Heart left ventricle (tissue), 16 donors: ENCODE measurements at regions of chr9 and their contacts with region 1.

Region 1: DNA sequence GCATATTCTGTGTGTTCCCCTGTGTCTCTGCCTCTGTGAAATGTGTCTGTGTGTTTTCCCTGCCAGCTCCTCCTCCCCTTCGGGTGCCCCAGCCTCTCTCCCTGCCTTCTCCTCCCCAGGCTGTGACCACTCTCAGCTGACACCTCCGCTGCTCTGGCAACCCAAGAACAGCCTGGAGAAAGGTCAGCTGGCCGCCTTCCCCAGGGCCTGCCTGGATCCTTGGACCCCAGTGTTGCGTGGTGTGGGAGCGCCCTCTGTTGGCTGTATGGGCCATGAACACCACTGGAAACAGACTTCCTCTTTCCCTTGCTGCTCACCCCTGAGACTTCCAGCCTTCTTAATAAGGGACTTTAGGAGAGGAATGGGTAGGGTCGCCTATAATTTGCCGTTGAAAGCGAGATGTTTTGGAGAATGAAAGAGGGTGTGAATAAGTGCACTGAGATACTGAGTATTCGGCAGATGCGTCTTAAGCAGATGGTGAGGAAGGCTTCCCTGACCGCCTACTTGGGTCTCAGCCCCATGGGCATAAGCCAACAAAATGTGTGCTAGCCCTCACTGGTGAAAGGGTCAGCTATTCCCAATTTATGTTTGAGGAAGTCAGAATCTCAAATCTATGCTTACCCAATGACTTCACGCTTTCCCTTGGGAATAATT is 114.9 kb upstream of the TRIM32 start:
- DNase-seq: peak; percentile 86 to 95 (median 92)
- ATAC-seq: peak; percentile 94 to 99 (median 97)
- H3K4me3 ChIP-seq: no peak overlapping the region
- H3K27ac ChIP-seq: peak overlapping the region in 1 of 12 donors; percentile 22
- H3K4me1 ChIP-seq: peaks cover 0 to 42% (median 23%) of the 10 kb centered on the region in 12 donors
- H3K27me3 ChIP-seq: no peaks in the 10 kb centered on the region
- CTCF ChIP-seq: peak; percentile 71 to 90 (median 84)
- POLR2A ChIP-seq: no peak

Region 2: DNA sequence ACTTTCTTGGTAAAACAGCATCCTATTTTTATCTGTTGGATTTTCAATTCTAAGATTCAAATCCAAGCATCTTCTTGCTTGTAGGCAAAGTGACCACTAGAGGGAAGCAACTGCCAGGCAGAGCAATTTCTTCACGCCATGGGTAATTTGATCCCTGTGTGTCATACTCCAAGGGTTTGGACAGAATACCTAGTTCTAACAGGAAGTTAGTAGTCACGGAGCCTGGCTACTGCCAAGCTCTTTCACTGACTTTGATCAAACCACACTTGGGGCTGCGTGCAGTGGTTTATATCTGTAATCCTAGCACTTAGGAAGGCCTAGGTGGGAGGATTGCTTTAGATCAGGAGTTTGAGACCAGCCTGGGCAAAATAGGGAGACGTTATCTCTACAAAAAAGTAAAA is 980.6 kb before region 1 on chr9:
- intact Hi-C with region 1: loop called in 9 of 10 experiments (anchors 5 to 10 kb)
- DNase-seq: peak in 4 of 5 donors; percentile 33 to 64 (median 52)
- ATAC-seq: peak; percentile 53 to 92 (median 86)
- H3K4me3 ChIP-seq: no peak overlapping the region
- H3K27ac ChIP-seq: peak overlapping the region in 1 of 12 donors; percentile 38
- H3K4me1 ChIP-seq: peaks cover 0 to 6% (median 0%) of the 10 kb centered on the region in 12 donors
- H3K27me3 ChIP-seq: peaks cover 0 to 25% (median 3%) of the 10 kb centered on the region in 9 donors
- CTCF ChIP-seq: peak; percentile 43 to 81 (median 65)
- POLR2A ChIP-seq: no peak

Region 3: GRCh38 chr9:115883457-115884329 is 688.5 kb before region 1 on chr9:
- intact Hi-C with region 1: loop called in 5 of 10 experiments (anchors 2 to 10 kb)
- DNase-seq: peak in 2 of 5 donors; percentile 19
- ATAC-seq: peak; percentile 47 to 83 (median 69)
- H3K4me3 ChIP-seq: no peak overlapping the region
- H3K27ac ChIP-seq: no peak overlapping the region
- H3K4me1 ChIP-seq: no peaks in the 10 kb centered on the region
- H3K27me3 ChIP-seq: no peaks in the 10 kb centered on the region
- CTCF ChIP-seq: peak; percentile 19 to 68 (median 54)
- POLR2A ChIP-seq: no peak

Region 4: GRCh38 chr9:116087246-116087645 is 485.0 kb before region 1 on chr9:
- intact Hi-C with region 1: loop called in 1 of 10 experiments (anchors 10 kb)
- DNase-seq: peak in 4 of 5 donors; percentile 25 to 72 (median 50)
- ATAC-seq: peak; percentile 91 to 94 (median 94)
- H3K4me3 ChIP-seq: no peak overlapping the region
- H3K27ac ChIP-seq: peak overlapping the region in 11 of 12 donors; percentile 6 to 68 (median 52)
- H3K4me1 ChIP-seq: peaks cover 0 to 20% (median 5%) of the 10 kb centered on the region in 12 donors
- H3K27me3 ChIP-seq: no peaks in the 10 kb centered on the region
- CTCF ChIP-seq: no peak
- POLR2A ChIP-seq: no peak

Region 5: GRCh38 chr9:116156621-116157314 is 415.5 kb before region 1 on chr9:
- intact Hi-C with region 1: loop called in 9 of 10 experiments (anchors 1 to 5 kb)
- DNase-seq: peak; percentile 80 to 90 (median 81)
- ATAC-seq: peak; percentile 92 to 97 (median 94)
- H3K4me3 ChIP-seq: peak overlapping the region in 10 of 12 donors; percentile 11 to 75 (median 50)
- H3K27ac ChIP-seq: peak overlapping the region; percentile 65 to 97 (median 84)
- H3K4me1 ChIP-seq: peaks cover 0 to 36% (median 6%) of the 10 kb centered on the region in 12 donors
- H3K27me3 ChIP-seq: peaks cover 0 to 46% (median 4%) of the 10 kb centered on the region in 9 donors
- CTCF ChIP-seq: peak in 1 of 12 donors; percentile 1
- POLR2A ChIP-seq: peak in 1 of 2 donors; percentile 39

Region 6: DNA sequence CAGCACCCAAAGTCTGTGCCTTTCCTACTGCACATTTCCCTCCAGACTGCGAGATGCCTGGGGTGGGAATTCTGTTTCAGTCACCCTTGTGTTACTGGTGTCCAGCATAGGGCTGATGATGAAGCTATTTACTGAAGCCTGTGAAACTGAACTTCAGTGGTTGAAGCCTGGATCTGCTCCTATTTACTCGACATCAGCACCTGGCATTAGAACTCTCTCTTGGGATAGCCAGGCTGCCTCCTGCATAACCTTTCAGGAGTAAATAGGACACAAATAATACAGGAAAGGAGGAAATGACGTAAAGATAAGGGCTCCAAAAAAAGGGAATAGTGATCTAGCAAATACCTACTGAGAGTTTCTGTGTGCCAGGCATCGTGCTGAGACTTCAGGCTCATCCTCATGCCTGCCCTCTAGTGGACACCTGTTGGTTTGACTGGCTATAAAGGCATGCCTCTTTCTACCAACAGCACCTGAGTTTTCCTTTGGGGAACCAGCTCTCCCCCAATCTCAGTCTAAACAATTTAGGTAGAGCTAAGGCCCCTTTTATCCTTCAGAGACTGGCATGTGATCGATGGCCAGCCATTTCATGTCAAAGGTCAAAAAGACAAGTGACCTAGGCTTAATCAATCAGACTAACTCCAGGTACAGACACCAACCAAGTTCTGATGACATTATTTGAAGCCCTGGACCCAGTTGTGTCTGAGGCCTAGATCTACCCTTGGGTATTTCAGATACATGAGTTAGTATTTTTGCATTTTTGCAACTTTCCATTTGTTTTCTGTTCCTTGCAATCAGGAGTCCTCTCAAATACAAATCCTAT is 77.2 kb before region 1 on chr9:
- intact Hi-C with region 1: loop called in 4 of 10 experiments (anchors 2 to 5 kb)
- DNase-seq: peak in 1 of 5 donors; percentile 27
- ATAC-seq: peak in 2 of 4 donors; percentile 27 to 45
- H3K4me3 ChIP-seq: no peak overlapping the region
- H3K27ac ChIP-seq: no peak overlapping the region
- H3K4me1 ChIP-seq: no peaks in the 10 kb centered on the region
- H3K27me3 ChIP-seq: no peaks in the 10 kb centered on the region
- CTCF ChIP-seq: peak; percentile 46 to 73 (median 61)
- POLR2A ChIP-seq: no peak

Region 7: GRCh38 chr9:116506685-116507084 is 65.5 kb before region 1 on chr9:
- intact Hi-C with region 1: no loop called
- DNase-seq: no peak
- ATAC-seq: no peak
- H3K4me3 ChIP-seq: no peak overlapping the region
- H3K27ac ChIP-seq: no peak overlapping the region
- H3K4me1 ChIP-seq: no peaks in the 10 kb centered on the region
- H3K27me3 ChIP-seq: no peaks in the 10 kb centered on the region
- CTCF ChIP-seq: no peak
- POLR2A ChIP-seq: no peak